ENCODE measurements at regions of chr1 and their contacts with region 1.

Region 1: GRCh38 chr1:50822035-50822776 is 137.9 kb downstream of the FAF1 start:
- DNase-seq: no peak
- ATAC-seq: no peak
- H3K4me3 ChIP-seq: no peak overlapping the region
- H3K4me3 Mint-ChIP-seq: no peak overlapping the region
- H3K27ac ChIP-seq: no peak overlapping the region
- H3K27ac Mint-ChIP-seq: no peak overlapping the region
- H3K4me1 ChIP-seq: no peaks in the 10 kb centered on the region
- H3K4me1 Mint-ChIP-seq: peaks cover 6 to 14% (median 8%) of the 10 kb centered on the region in 3 donors
- H3K27me3 ChIP-seq: no peaks in the 10 kb centered on the region
- H3K27me3 Mint-ChIP-seq: no peaks in the 10 kb centered on the region

Region 2: DNA sequence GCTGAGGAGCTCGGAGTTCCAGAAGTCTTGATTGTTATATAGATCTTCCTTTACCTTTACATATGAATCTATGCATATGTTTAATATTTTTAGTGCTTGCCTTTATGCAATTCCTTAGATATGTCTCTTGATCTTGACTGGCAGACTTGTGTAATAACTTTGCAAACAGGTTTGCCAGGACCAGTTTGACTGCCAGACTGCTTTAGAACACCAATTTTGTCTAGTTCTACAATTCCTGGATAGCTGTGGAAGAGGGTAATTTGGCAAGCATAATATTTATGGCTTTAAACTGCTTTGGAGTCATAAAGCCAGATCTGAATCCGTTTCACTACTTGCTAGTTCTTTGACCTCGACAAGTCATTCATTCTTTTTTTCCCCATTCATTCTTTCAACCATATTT is 112.1 kb before region 1 on chr1:
- CTCF ChIA-PET with region 1: no interaction called
- POLR2A ChIA-PET with region 1: interaction called in 1 of 2 experiments, 11 read pairs
- DNase-seq: no peak
- ATAC-seq: no peak
- H3K4me3 ChIP-seq: no peak overlapping the region
- H3K4me3 Mint-ChIP-seq: no peak overlapping the region
- H3K27ac ChIP-seq: no peak overlapping the region
- H3K27ac Mint-ChIP-seq: no peak overlapping the region
- H3K4me1 ChIP-seq: no peaks in the 10 kb centered on the region
- H3K4me1 Mint-ChIP-seq: peaks cover 3 to 6% (median 4%) of the 10 kb centered on the region in 3 donors
- H3K27me3 ChIP-seq: no peaks in the 10 kb centered on the region
- H3K27me3 Mint-ChIP-seq: no peaks in the 10 kb centered on the region

Measured in T-cell (primary cell).